Activated CD4-positive, alpha-beta memory T cell treated with anti-CD3 and anti-CD28 coated beads for 36 hours (primary cell): ENCODE measurements at regions of chr4 and their contacts with region 1.

Region 1: GRCh38 chr4:83356899-83357661 is 22.4 kb upstream of the HPSE start:
- DNase-seq: peak; percentile 65
- H3K4me3 Mint-ChIP-seq: peak overlapping the region; percentile 41
- H3K27ac Mint-ChIP-seq: peak overlapping the region; percentile 86
- H3K4me1 Mint-ChIP-seq: peaks cover 17% of the 10 kb centered on the region
- H3K27me3 Mint-ChIP-seq: no peaks in the 10 kb centered on the region

Region 2: DNA sequence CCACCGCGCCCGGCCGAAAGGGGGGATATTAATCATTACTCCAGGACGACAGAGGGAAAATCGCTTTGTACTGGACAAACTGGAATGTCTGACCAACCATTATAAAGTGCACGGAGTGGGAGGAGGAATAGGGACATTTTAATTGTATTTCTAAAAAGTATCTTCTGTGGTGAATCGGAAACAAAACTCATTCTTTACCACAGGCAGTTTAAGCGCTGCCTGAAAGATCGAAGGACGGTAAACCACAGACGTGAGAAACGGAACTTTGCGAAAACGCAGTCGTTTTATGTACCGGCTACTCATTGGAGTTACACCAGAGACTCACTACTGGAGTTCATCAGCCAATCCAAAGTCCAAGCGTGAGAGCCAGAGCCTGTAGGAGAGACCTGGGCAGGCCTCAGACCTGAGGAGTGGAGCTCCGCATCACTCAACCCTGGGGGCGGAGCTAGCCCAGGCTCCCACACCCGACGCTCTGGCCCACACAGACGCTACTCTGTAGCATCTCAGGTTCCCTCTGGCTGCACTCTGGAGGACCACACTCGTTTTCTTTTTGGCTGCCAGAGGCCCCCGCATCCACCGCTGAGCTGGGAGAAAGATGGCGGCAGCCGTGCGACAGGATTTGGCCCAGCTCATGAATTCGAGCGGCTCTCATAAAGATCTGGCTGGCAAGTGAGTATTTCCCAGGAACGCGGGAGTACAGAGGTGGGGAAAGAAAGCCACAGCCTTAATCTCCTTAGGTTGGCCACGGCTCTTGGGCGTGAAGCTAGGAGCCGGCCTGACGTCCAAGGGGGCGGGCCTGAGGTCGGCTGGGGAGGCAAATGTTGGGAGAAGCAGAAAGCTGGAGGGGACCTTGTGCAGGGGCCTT is 322.2 kb before region 1 on chr4 and contains the start of gene COPS4:
- CTCF ChIA-PET with region 1: no interaction called
- POLR2A ChIA-PET with region 1: interaction called, 4 read pairs
- intact Hi-C with region 1: loop called (anchors 2 kb)
- DNase-seq: peak; percentile 97
- H3K4me3 Mint-ChIP-seq: peak within 1 kb of the TSS; percentile 85
- H3K27ac Mint-ChIP-seq: peak within 1 kb of the TSS; percentile 98
- H3K4me1 Mint-ChIP-seq: peaks cover 28% of the 10 kb centered on the region
- H3K27me3 Mint-ChIP-seq: no peaks in the 10 kb centered on the region
- total RNA-seq, gene COPS4: 38.5 to 40.6 TPM

Region 3: DNA sequence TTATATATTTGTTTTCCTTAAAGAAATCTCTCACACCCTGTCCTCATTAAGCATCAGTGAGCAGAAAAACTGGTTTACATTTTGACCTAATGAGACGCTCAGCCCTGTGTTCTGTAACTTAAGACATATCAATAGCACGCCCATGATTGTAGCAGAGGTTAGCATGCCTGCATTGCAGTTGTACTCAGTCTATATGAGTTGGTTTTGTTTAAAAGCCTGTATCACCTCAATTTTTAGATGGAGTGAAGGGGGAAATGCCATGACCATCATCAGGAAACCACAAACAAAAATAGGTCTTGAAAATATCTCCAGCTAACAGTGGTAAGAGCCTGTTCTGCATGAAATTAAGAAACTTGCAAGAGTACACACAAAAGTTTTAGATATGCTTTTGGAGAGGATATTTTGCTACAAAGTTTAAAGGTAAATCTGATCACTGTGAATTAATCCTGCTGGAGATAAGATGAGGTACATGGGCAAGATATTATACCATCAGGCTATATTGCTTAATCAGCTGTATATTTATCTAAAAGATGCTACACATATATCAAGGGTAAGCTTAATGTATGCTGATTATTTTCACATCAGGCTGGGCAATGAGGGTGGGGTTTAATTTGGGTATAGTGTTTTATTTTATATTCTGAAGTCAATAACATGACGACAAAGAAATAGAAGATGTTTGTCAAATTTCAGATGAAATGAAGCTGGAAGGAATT is 59.4 kb before region 1 on chr4:
- CTCF ChIA-PET with region 1: no interaction called
- POLR2A ChIA-PET with region 1: no interaction called
- intact Hi-C with region 1: no loop called
- DNase-seq: no peak
- H3K4me3 Mint-ChIP-seq: no peak overlapping the region
- H3K27ac Mint-ChIP-seq: no peak overlapping the region
- H3K4me1 Mint-ChIP-seq: peaks cover 15% of the 10 kb centered on the region
- H3K27me3 Mint-ChIP-seq: no peaks in the 10 kb centered on the region

Region 4: DNA sequence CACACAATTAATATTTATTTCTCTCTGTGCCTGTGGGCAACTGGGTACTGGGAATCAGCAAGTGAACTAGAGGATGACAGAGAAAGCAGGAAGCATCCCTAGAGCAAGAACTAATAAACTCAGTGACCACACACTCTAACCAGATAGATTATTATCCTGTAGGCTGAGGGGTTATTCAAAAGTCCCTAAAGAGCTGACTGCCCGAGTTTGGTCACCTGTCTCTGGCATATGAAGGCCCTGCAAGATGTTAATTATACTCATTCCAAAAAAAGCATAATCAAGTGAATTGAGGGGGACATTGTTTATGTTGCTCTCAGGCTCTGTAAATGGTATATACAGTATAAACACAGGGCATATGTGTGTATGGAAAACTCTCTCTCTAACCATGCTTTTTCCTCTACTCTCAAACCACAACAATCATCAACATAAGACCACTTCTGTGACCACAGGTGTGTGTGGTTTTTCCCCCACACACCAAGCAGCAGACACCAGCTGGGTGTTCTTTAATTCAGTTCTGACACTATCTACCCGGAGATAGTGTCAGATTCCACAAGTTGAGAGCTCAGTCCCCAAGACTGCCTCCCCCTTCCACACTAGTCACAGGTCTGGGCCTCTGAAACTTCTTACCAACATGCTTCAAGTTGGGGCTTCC is 16.3 kb before region 1 on chr4:
- CTCF ChIA-PET with region 1: interaction called, 4 read pairs
- POLR2A ChIA-PET with region 1: interaction called, 11 read pairs
- intact Hi-C with region 1: loop called (anchors 1 kb)
- DNase-seq: peak; percentile 60
- H3K4me3 Mint-ChIP-seq: peak overlapping the region; percentile 17
- H3K27ac Mint-ChIP-seq: peak overlapping the region; percentile 63
- H3K4me1 Mint-ChIP-seq: peaks cover 19% of the 10 kb centered on the region
- H3K27me3 Mint-ChIP-seq: peaks cover 13% of the 10 kb centered on the region

Region 5: GRCh38 chr4:83484500-83485461 is 127.7 kb after region 1 on chr4 and contains the start of gene ABRAXAS1:
- CTCF ChIA-PET with region 1: no interaction called
- POLR2A ChIA-PET with region 1: no interaction called
- intact Hi-C with region 1: loop called (anchors 10 kb)
- DNase-seq: peak; percentile 95
- H3K4me3 Mint-ChIP-seq: peak within 1 kb of the TSS; percentile 91
- H3K27ac Mint-ChIP-seq: peak within 1 kb of the TSS; percentile 94
- H3K4me1 Mint-ChIP-seq: peaks cover 14% of the 10 kb centered on the region
- H3K27me3 Mint-ChIP-seq: no peaks in the 10 kb centered on the region
- total RNA-seq, gene ABRAXAS1: 17.5 to 18.0 TPM

Region 6: DNA sequence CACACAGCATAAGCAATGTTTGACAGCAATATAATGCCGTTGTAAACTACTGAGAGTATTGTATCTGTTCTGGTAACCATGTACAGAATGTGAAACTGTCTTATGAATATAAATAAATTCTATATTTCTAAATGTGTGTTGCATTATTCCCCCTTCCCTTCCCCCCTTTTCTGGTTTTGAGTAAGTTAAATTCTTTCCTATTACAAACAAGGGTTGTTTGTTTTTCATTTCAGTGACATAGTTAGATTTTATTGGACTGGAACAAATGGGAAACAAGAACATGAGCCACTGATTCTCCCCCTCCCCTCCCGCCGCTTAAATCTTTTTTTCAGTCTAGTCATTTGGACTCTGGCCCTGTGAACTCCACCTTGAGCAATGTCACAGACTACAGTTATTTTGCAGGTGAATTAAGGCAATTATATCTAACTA is 248.7 kb after region 1 on chr4:
- CTCF ChIA-PET with region 1: no interaction called
- POLR2A ChIA-PET with region 1: no interaction called
- intact Hi-C with region 1: no loop called
- DNase-seq: no peak
- H3K4me3 Mint-ChIP-seq: no peak overlapping the region
- H3K27ac Mint-ChIP-seq: no peak overlapping the region
- H3K4me1 Mint-ChIP-seq: no peaks in the 10 kb centered on the region
- H3K27me3 Mint-ChIP-seq: no peaks in the 10 kb centered on the region

Region 7: DNA sequence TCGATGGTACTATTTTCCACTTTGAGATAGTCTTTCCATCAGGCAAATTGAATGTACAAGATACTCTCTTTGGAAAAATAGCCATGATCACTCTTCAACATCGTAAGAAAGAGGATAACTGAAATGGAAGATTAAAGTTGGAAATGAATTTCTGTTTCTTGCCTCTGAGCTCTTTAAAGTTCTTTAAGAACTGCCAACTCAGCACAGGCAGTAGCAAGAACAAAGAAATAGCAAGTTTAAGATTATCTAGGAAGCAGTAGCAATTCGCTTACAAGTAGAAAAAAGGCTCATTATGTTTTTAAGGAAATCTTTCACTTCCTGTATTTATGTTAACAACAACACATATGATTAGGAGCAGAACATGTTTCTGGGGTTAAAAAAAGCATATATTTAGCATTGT is 1353.5 kb after region 1 on chr4:
- CTCF ChIA-PET with region 1: no interaction called
- POLR2A ChIA-PET with region 1: no interaction called
- intact Hi-C with region 1: no loop called
- DNase-seq: no peak
- H3K4me3 Mint-ChIP-seq: no peak overlapping the region
- H3K27ac Mint-ChIP-seq: no peak overlapping the region
- H3K4me1 Mint-ChIP-seq: no peaks in the 10 kb centered on the region
- H3K27me3 Mint-ChIP-seq: peaks cover 2% of the 10 kb centered on the region